Aorta (tissue), 5 donors: ENCODE measurements at regions of chr22 and their contacts with region 1.

Region 1: DNA sequence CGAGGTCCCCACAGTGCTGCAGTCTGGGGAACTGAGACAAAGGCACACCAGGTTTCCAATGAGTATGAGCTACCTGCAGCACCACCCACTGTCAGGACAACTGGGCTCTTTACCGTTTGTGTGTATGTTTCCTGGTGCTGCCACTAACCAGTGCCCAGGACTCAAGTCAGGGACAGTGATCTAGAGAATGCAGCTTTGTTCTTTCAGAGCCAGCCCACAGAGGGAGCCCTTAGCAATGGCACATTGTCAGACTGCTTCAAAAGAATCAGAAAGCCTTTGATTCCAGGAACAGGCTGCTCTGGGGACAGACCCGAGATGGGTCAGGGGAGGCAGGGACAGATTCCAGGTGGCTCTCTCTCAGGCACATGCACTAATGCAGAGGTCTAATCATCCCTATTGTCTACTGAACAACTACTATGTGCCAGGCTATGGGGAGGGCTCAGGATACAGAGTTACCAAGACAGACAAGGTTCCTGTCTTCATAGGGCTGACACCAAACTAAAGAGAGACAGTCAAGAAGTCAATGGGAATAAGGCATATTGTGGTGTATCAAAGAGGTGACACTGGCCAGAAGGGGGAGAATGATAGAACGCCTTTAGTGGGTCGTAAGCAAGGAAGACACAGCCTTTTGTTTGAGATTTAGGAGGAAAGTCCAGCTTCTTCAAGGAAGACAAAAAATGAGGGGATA is 103.7 kb downstream of the VPREB1 start:
- DNase-seq: no peak
- ATAC-seq: no peak
- H3K4me3 ChIP-seq: no peak overlapping the region
- H3K27ac ChIP-seq: no peak overlapping the region
- H3K4me1 ChIP-seq: no peaks in the 10 kb centered on the region
- H3K27me3 ChIP-seq: no peaks in the 10 kb centered on the region

Region 2: DNA sequence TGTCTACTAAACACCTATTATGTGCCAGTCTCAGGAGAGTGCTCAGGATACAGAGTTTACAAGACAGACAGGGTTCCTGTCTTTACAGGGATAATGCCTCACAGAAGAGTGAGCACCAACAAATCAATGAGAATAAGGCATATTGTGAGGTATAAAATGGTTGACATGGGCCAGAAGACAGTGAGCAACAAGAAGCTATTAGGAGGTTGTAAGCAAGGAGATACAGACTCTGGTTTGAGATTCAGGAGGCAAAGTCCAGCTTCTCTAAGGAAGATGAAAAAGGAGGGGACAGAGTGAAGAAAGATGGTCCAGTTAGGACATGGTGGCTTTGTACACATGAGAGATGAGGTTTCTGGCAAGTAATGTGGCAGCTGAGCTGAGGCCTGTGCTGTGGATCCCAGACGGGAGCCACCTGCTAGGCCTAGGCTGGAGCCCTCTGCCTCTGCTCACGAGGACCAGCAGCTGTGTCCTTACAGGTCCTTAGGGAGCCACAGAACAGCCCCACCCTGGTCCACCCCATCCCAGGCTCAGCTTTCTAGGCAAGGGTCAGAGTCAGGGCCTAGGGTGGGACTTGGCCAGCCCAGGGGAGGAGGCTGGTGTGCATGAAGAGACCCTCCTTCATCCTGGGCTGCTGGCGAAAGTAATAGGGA is 49.7 kb after region 1 on chr22:
- intact Hi-C with region 1: loop called in 1 of 2 experiments (anchors 2 kb)
- DNase-seq: no peak
- ATAC-seq: peak; percentile 52
- H3K4me3 ChIP-seq: no peak overlapping the region
- H3K27ac ChIP-seq: no peak overlapping the region
- H3K4me1 ChIP-seq: no peaks in the 10 kb centered on the region
- H3K27me3 ChIP-seq: no peaks in the 10 kb centered on the region

Region 3: GRCh38 chr22:22787786-22788459 is 439.7 kb after region 1 on chr22:
- intact Hi-C with region 1: no loop called
- DNase-seq: peak in 1 of 2 donors; percentile 63
- ATAC-seq: peak; percentile 62
- H3K4me3 ChIP-seq: no peak overlapping the region
- H3K27ac ChIP-seq: no peak overlapping the region
- H3K4me1 ChIP-seq: no peaks in the 10 kb centered on the region
- H3K27me3 ChIP-seq: no peaks in the 10 kb centered on the region